Activated CD8-positive, alpha-beta T cell treated with anti-CD3 and anti-CD28 coated beads, Interleukin-2, amount 10 ng/mL, durations not matched to agents 7 days and 5 days (primary cell): ENCODE measurements at regions of chr14 and their contacts with region 1.

Region 1: GRCh38 chr14:95442633-95443021 is 73.8 kb downstream of the SYNE3 start:
- DNase-seq: peak; percentile 78
- ATAC-seq: peak; percentile 94
- H3K4me3 Mint-ChIP-seq: no peak overlapping the region
- H3K27ac Mint-ChIP-seq: peak overlapping the region; percentile 40
- H3K4me1 Mint-ChIP-seq: peaks cover 3% of the 10 kb centered on the region
- H3K27me3 Mint-ChIP-seq: no peaks in the 10 kb centered on the region

Region 2: DNA sequence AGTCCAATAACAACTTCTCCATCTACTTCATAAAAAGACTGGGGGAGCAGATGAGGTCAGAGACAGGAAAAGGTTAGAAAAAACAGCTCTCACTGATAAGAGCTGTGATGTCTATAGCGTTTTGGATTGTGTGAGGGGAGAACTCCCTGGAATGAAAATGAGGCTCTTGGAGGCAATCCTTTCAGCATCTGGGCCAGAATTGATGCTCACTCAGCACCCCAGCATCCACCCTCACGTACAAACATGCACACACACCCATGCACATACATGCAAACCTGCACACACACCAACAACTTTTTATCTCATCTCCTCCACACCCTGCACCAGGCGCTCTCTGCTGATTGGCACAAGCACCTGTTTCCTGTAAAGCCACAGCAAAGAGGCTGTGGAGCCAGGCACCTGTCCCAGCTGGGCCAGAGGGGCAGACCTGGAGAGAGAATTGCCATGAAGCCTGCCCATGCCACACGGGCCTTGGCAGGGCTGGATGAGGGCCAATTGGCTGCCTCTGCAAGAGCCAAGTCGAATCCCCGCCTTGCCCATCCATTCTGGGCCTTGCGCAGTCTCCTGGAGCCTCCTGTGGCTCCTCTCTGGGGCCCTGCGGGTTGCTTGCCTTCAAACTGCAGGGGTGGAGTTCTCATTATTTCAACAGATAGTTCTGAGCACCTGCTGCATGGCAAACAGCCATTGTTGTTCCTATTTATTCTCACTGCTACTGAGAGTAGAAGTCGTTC is 20.7 kb after region 1 on chr14:
- CTCF ChIA-PET with region 1: interaction called, 23 read pairs
- POLR2A ChIA-PET with region 1: interaction called, 3 read pairs
- DNase-seq: peak; percentile 48
- ATAC-seq: peak; percentile 70
- H3K4me3 Mint-ChIP-seq: peak overlapping the region; percentile 18
- H3K27ac Mint-ChIP-seq: peak overlapping the region; percentile 89
- H3K4me1 Mint-ChIP-seq: peaks cover 49% of the 10 kb centered on the region
- H3K27me3 Mint-ChIP-seq: no peaks in the 10 kb centered on the region

Region 3: DNA sequence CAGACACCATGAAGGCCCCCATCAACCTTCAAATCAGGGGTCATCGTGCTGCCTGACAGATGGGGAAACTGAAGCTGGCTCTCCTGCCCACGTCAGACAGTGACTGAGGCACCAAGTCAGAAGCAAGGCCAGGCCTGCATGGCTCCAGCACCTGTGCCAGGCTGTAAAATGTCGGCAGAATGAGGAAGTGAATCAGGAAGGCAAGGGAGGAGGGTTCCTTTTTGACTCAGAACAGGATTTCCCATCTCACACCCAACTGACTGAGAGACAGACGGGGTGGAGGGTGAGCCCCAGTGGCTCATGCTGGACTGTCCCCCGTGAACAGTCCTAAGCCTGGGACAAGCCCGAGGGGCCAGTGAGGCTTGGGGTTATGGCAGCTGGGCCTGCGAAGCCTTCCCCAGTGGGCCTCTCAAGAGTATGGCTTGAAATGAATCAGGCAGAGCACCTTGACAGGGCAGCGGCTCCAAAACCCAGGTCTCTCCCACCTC is 53.0 kb after region 1 on chr14:
- CTCF ChIA-PET with region 1: interaction called, 11 read pairs
- POLR2A ChIA-PET with region 1: no interaction called
- DNase-seq: no peak
- ATAC-seq: peak; percentile 32
- H3K4me3 Mint-ChIP-seq: peak overlapping the region; percentile 18
- H3K27ac Mint-ChIP-seq: peak overlapping the region; percentile 89
- H3K4me1 Mint-ChIP-seq: peaks cover 65% of the 10 kb centered on the region
- H3K27me3 Mint-ChIP-seq: no peaks in the 10 kb centered on the region

Region 4: DNA sequence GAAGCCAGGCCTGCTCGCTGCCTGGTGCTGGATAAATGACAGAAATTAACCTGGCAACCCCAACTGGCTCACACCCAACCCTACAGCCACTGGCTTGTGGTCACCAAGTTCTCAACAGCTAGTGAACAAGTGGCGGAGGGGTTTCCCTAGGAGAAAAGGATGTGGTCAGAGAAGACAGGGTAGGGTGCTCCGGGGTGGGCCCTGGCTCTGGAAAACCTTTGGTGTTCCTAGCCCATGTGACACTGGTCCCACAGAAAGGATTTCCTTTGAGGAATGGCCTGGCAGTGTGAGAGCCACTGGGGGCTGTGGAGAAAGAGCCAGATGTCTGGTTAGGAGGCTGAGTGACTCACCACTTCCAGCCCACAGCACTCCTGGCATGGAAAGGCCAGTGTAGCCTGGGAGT is 65.1 kb after region 1 on chr14:
- CTCF ChIA-PET with region 1: interaction called, 10 read pairs
- POLR2A ChIA-PET with region 1: no interaction called
- DNase-seq: peak; percentile 51
- ATAC-seq: peak; percentile 64
- H3K4me3 Mint-ChIP-seq: no peak overlapping the region
- H3K27ac Mint-ChIP-seq: peak overlapping the region; percentile 66
- H3K4me1 Mint-ChIP-seq: peaks cover 78% of the 10 kb centered on the region
- H3K27me3 Mint-ChIP-seq: no peaks in the 10 kb centered on the region

Region 5: GRCh38 chr14:95515596-95516552 is 73.2 kb after region 1 on chr14:
- CTCF ChIA-PET with region 1: interaction called, 185 read pairs
- POLR2A ChIA-PET with region 1: interaction called, 6 read pairs
- DNase-seq: peak; percentile 86
- ATAC-seq: peak; percentile 85
- H3K4me3 Mint-ChIP-seq: peak overlapping the region; percentile 91
- H3K27ac Mint-ChIP-seq: peak overlapping the region; percentile 85
- H3K4me1 Mint-ChIP-seq: peaks cover 66% of the 10 kb centered on the region
- H3K27me3 Mint-ChIP-seq: no peaks in the 10 kb centered on the region

Region 6: GRCh38 chr14:95534299-95535225 is 91.9 kb after region 1 on chr14 and contains the start of gene GLRX5:
- CTCF ChIA-PET with region 1: interaction called, 185 read pairs
- POLR2A ChIA-PET with region 1: no interaction called
- DNase-seq: peak; percentile 99
- ATAC-seq: peak; percentile 91
- H3K4me3 Mint-ChIP-seq: peak within 1 kb of the TSS; percentile 91
- H3K27ac Mint-ChIP-seq: peak within 1 kb of the TSS; percentile 89
- H3K4me1 Mint-ChIP-seq: peaks cover 67% of the 10 kb centered on the region
- H3K27me3 Mint-ChIP-seq: no peaks in the 10 kb centered on the region
- total RNA-seq, gene GLRX5: 52.8 to 54.6 TPM